Caco-2 (cell line): ENCODE measurements at regions of chr7 and their contacts with region 1.

Region 1: DNA sequence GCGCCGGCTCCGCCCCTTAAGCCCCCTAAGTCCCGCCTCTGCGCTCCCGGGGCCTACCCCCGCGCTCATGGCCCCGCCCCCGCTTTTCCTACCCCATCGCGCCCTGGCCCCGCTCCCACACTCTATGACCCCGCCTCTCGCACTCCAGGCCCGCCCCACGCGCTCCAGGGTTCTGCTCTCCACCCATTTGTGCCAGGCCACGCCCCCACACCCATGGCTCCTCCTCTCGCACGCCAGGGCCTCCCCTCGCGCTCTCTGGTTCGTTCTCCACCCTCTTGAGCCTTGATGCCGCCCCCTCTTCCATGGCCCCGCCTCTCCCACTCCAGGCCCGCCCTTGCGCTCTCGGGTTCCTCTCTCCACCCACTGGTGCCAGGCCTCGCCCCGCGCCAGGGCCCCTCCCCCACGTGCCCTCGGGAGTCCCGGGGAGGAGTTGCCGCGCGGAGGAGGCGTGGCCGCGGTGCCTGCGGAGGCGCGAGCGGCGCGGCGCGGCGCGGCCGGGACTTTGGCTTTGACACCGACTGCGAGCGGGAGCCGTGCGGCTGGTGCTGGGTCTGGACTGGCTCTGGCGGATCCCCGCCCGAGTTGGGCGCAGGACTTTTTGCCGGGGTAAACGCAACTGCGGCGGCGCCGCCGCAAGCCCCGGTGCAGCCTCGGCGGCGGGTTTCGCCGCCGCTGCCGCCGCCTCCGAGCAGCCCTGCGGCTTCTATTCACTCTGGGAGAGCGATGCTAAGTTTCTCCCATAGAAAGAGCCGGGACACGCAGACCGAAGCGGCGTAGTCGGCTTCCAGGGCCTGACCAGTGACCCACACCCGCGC is at the start of gene EEPD1:
- DNase-seq: peak; percentile 100
- H3K4me3 ChIP-seq: peak within 1 kb of the TSS; percentile 83
- H3K4me3 Mint-ChIP-seq: peak within 1 kb of the TSS; percentile 76
- H3K27ac Mint-ChIP-seq: peak within 1 kb of the TSS; percentile 63
- H3K4me1 ChIP-seq: peaks cover 9% of the 10 kb centered on the region; the same call in 1 of the 2 replicates
- H3K4me1 Mint-ChIP-seq: no peaks in the 10 kb centered on the region
- H3K27me3 ChIP-seq: no peaks in the 10 kb centered on the region
- H3K27me3 Mint-ChIP-seq: no peaks in the 10 kb centered on the region
- CTCF ChIP-seq: no peak
- total RNA-seq, gene EEPD1: 1.8 and 2.1 TPM in 2 replicates

Region 2: DNA sequence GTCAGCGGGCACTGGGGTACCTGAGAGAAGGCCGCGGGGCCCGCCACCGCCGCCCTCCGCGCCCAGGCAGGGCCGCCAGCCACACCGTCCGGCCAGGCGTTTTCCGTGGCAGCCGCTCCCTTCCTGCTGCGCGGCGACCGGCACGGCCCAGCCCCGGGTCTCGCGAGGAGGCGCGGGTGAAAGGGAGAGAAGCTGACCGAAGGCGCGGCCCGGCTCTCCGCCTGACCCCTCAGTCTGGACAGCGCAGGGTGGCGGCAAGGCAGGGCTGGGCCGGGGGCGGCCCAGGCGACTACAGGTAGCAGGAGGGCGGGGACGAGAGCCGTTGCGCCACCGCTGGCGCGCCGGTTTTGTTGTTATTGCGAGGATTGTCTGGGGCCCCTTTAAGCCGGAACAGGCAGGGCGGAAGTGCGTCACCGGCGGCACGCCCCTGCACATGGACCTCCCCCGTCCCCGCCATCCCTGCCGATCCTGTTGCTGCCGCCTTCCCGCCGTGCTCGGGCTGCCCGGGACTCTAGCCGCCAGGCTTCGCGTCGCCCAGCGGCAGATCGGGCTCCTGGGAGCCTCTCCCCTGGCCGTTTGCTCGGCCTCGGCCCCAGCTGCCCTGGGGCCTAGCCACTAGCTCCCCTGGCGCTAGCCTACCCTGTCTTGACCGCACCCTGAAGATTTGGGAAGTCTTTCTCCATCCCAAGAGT is 458.0 kb before region 1 on chr7 and contains the start of gene HERPUD2:
- CTCF ChIA-PET with region 1: no interaction called
- POLR2A ChIA-PET with region 1: no interaction called
- intact Hi-C with region 1: loop called (anchors 10 kb)
- DNase-seq: peak; percentile 98
- H3K4me3 ChIP-seq: peak within 1 kb of the TSS; percentile 98
- H3K4me3 Mint-ChIP-seq: peak within 1 kb of the TSS; percentile 95
- H3K27ac Mint-ChIP-seq: peak within 1 kb of the TSS; percentile 94
- H3K4me1 ChIP-seq: peaks cover 40% of the 10 kb centered on the region
- H3K4me1 Mint-ChIP-seq: peaks cover 36% of the 10 kb centered on the region
- H3K27me3 ChIP-seq: no peaks in the 10 kb centered on the region
- H3K27me3 Mint-ChIP-seq: no peaks in the 10 kb centered on the region
- CTCF ChIP-seq: no peak
- total RNA-seq, gene HERPUD2: 25.2 and 29.6 TPM in 2 replicates

Region 3: DNA sequence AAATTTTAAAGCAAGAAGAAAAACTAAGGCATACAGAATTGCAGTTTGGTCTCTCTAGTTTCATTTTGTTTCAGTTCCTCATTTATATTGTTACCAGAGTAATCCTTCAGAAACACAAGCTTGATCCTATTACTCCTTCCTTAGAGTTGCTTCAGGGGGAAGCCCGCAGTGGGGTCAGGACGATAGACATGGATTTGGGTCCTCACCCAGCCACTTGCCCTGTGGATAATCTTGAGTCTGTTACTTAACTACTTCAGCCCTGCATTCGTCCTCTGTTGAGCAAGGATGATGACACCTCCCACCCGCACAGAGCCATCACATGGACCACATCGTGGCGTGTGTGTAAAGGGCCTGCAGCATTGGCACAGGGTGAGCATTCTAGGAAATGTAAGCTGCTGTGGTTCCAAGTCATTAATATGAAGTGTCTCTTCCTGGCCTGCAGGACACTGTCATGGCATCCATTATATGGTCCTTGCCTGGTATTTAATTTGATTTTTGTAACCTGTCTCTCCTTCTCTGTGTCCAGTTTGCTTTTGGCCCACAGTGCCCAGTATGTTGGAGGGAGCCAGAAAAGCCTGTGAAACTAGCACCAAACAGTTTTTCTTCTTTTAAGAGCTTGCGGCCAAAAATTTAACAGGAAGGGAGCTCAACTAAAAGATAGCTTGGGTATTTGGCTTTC is 111.3 kb after region 1 on chr7:
- CTCF ChIA-PET with region 1: no interaction called
- POLR2A ChIA-PET with region 1: no interaction called
- intact Hi-C with region 1: loop called (anchors 2 kb)
- DNase-seq: no peak
- H3K4me3 ChIP-seq: no peak overlapping the region
- H3K4me3 Mint-ChIP-seq: no peak overlapping the region
- H3K27ac Mint-ChIP-seq: no peak overlapping the region
- H3K4me1 ChIP-seq: peaks cover 7% of the 10 kb centered on the region
- H3K4me1 Mint-ChIP-seq: peaks cover 15% of the 10 kb centered on the region
- H3K27me3 ChIP-seq: no peaks in the 10 kb centered on the region
- H3K27me3 Mint-ChIP-seq: no peaks in the 10 kb centered on the region
- CTCF ChIP-seq: no peak